ENCODE measurements at regions of chr15 and their contacts with region 1.

Region 1: GRCh38 chr15:35674873-35675781 is 129.2 kb upstream of the DPH6 start:
- DNase-seq: no peak
- H3K4me3 Mint-ChIP-seq: no peak overlapping the region
- H3K27ac Mint-ChIP-seq: no peak overlapping the region
- H3K4me1 Mint-ChIP-seq: peaks cover 13% of the 10 kb centered on the region
- H3K27me3 Mint-ChIP-seq: peaks cover 3% of the 10 kb centered on the region

Region 2: DNA sequence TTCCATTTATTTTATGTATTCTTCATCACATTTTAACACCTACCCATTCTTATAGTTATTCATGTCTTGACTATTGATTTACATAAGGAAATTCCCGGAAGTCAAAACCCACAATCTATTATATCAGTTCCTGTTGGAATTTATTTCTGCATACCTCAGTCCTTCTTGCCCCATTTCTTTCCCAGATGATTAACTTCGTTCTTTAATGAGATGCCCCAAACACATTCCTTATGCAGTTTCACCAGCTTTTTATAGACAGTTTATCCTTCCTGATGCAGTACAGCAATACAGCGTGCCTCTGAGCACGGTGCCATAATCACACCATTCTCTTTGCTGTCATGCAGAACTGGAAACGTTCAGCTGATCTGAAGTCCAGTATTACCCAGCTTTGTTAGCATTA is 414.2 kb before region 1 on chr15:
- intact Hi-C with region 1: no loop called
- DNase-seq: no peak
- H3K4me3 Mint-ChIP-seq: no peak overlapping the region
- H3K27ac Mint-ChIP-seq: no peak overlapping the region
- H3K4me1 Mint-ChIP-seq: no peaks in the 10 kb centered on the region
- H3K27me3 Mint-ChIP-seq: no peaks in the 10 kb centered on the region

Region 3: GRCh38 chr15:35657679-35658311 is 17.3 kb before region 1 on chr15:
- intact Hi-C with region 1: loop called (anchors 1 kb)
- DNase-seq: no peak
- H3K4me3 Mint-ChIP-seq: no peak overlapping the region
- H3K27ac Mint-ChIP-seq: peak overlapping the region; percentile 22
- H3K4me1 Mint-ChIP-seq: peaks cover 12% of the 10 kb centered on the region
- H3K27me3 Mint-ChIP-seq: peaks cover 4% of the 10 kb centered on the region

Region 4: GRCh38 chr15:36707884-36708435 is 1032.8 kb after region 1 on chr15:
- intact Hi-C with region 1: no loop called
- DNase-seq: no peak
- H3K4me3 Mint-ChIP-seq: no peak overlapping the region
- H3K27ac Mint-ChIP-seq: no peak overlapping the region
- H3K4me1 Mint-ChIP-seq: no peaks in the 10 kb centered on the region
- H3K27me3 Mint-ChIP-seq: no peaks in the 10 kb centered on the region